ENCODE measurements at regions of chr11 and their contacts with region 1.

Region 1: DNA sequence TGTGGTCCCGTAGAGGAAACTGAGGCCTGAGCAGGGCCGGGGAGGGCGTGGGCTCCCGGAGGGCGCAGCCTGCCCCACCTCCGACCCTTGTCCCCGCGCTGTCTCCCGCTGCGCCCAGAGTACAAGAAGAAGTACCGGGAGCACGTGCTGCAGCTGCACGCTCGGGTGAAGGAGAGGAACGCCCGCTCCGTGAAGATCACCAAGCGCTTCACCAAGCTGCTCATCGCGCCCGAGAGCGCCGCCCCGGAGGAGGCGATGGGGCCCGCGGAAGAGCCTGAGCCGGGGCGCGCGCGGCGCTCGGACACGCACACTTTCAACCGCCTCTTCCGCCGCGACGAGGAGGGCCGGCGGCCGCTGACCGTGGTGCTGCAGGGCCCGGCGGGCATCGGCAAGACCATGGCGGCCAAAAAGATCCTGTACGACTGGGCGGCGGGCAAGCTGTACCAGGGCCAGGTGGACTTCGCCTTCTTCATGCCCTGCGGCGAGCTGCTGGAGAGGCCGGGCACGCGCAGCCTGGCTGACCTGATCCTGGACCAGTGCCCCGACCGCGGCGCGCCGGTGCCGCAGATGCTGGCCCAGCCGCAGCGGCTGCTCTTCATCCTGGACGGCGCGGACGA is 1.9 kb downstream of the NLRP6 start:
- DNase-seq: peak in 4 of 5 donors; percentile 13 to 71 (median 26)
- ATAC-seq: peak in 3 of 4 donors; percentile 21 to 67 (median 52)
- H3K4me3 ChIP-seq: peak overlapping the region in 11 of 12 donors; percentile 3 to 49 (median 31)
- H3K27ac ChIP-seq: no peak overlapping the region
- H3K4me1 ChIP-seq: peaks cover 0 to 31% (median 16%) of the 10 kb centered on the region in 12 donors
- H3K27me3 ChIP-seq: peaks cover 39 to 86% (median 65%) of the 10 kb centered on the region in 9 donors
- CTCF ChIP-seq: no peak
- POLR2A ChIP-seq: no peak

Region 2: GRCh38 chr11:369336-370018 is 89.4 kb after region 1 on chr11 and contains the start of gene B4GALNT4:
- intact Hi-C with region 1: loop called in 1 of 10 experiments (anchors 10 kb)
- DNase-seq: no peak
- ATAC-seq: peak in 1 of 4 donors; percentile 19
- H3K4me3 ChIP-seq: peak within 1 kb of the TSS in 8 of 12 donors; percentile 8 to 41 (median 24)
- H3K27ac ChIP-seq: no peak within 1 kb of the TSS
- H3K4me1 ChIP-seq: peaks cover 0 to 12% (median 6%) of the 10 kb centered on the region in 12 donors
- H3K27me3 ChIP-seq: peaks cover 11 to 57% (median 43%) of the 10 kb centered on the region in 9 donors
- CTCF ChIP-seq: no peak
- POLR2A ChIP-seq: no peak
- total RNA-seq, gene B4GALNT4: 0.28 to 1.9 (median 0.67) TPM in 7 of 9 donors, not detected in the others

Measured in heart left ventricle (tissue), 16 donors.